T-cell (primary cell): ENCODE measurements at regions of chr14 and their contacts with region 1.

Region 1: DNA sequence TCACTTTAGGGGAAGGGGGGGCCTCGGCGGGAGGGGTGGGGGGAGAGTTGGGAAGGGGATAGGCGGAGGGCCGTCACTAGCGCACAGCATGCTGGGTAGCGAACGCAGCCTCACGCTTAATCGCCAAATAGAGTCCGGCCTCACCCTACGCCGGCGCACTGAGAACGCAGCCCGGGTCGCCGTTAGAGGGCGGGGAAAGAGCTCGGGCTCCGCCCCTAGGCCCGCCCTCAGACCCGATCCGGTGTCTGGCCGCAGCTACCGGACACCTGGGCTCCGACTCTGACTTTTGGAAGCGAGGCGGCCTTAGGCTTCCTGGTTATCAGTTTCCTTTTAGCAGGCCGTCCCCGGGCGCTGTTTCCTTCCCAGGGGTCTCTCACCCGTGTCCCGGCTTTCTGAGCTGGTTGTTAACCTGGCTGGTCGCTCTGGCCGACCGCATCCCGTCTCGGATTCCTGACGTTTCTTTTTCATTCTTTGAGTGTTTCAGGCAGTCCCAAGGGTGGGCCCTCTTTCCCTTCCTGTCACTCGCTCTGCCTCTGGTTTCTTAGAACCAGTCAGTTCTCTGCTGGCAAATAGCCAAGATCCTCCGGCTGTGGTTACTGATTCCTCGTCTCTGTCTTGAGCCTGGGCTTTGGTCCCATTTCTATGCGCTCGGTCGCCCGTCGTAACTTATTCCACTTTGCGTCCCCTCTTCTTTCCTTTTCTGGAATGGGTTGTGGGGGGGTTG is 378 bp upstream of the STRN3 start:
- DNase-seq: peak; percentile 73 to 94 (median 82)
- ATAC-seq: peak; percentile 86 to 92 (median 88)
- H3K4me3 ChIP-seq: peak overlapping the region; percentile 98 to 99
- H3K4me3 Mint-ChIP-seq: peak overlapping the region; percentile 90 to 97 (median 96)
- H3K27ac ChIP-seq: peak overlapping the region; percentile 94
- H3K27ac Mint-ChIP-seq: peak overlapping the region; percentile 93 to 96
- H3K4me1 ChIP-seq: peaks cover 10 to 11% of the 10 kb centered on the region in 2 experiments
- H3K4me1 Mint-ChIP-seq: peaks cover 54 to 68% (median 57%) of the 10 kb centered on the region in 3 donors
- H3K27me3 ChIP-seq: no peaks in the 10 kb centered on the region
- H3K27me3 Mint-ChIP-seq: no peaks in the 10 kb centered on the region

Region 2: DNA sequence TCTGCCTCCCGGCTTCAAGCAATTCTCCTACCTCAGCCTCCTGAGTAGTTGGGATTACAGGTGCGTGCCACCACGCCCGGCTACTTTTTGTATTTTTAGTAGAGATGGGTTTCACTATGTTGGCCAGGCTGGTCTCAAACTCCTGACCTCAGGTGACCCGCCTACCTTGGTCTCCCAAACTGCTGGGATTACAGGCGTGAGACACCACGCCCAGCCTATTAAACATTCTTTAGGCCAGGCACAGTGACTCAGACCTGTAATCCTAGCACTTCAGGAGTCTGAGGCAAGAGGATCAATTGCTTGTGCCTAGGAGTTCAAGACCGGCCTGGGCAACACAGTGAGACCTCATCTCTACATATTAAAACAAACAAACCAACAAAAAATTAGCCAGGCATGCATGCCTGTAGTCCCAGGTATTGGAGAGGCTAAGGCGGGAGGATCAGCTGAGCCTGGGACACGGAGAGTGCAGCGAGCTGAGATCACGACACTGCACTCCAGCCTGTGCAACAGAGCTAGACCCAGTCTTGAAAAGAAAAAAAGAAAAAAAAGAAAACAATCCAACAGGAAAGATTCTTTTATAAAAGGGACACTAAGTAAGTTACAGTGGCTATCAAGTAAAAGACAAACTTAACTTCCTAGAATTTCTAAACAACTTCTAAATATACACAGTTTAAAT is 110.8 kb after region 1 on chr14:
- CTCF ChIA-PET with region 1: no interaction called
- POLR2A ChIA-PET with region 1: interaction called in 1 of 2 experiments, 10 read pairs
- DNase-seq: no peak
- ATAC-seq: no peak
- H3K4me3 ChIP-seq: no peak overlapping the region
- H3K4me3 Mint-ChIP-seq: no peak overlapping the region
- H3K27ac ChIP-seq: no peak overlapping the region
- H3K27ac Mint-ChIP-seq: no peak overlapping the region
- H3K4me1 ChIP-seq: no peaks in the 10 kb centered on the region
- H3K4me1 Mint-ChIP-seq: peaks cover 0 to 3% (median 0%) of the 10 kb centered on the region in 3 donors
- H3K27me3 ChIP-seq: no peaks in the 10 kb centered on the region
- H3K27me3 Mint-ChIP-seq: no peaks in the 10 kb centered on the region